Activated T-helper 1 cell treated with anti-CD3 and anti-CD28 coated beads, Interleukin-12 subunit alpha, Interleukin-12 subunit beta, Interleukin-2, Interleukin-4 antibody, amounts not matched to agents 30 ng/mL and 10 ng/mL and 1 ng/mL, durations not matched to agents 14 hours and 24 hours and 36 hours (primary cell): ENCODE measurements at regions of chr17 and their contacts with region 1.

Region 1: GRCh38 chr17:81927653-81928543 is at the start of gene MAFG:
- DNase-seq: peak; percentile 88
- H3K4me3 Mint-ChIP-seq: peak within 1 kb of the TSS; percentile 89
- H3K27ac Mint-ChIP-seq: peak within 1 kb of the TSS; percentile 79
- H3K4me1 Mint-ChIP-seq: peaks cover 15% of the 10 kb centered on the region
- H3K27me3 Mint-ChIP-seq: peaks cover 2% of the 10 kb centered on the region
- total RNA-seq, gene MAFG: 33.8 and 35.5 TPM in 2 replicates

Region 2: DNA sequence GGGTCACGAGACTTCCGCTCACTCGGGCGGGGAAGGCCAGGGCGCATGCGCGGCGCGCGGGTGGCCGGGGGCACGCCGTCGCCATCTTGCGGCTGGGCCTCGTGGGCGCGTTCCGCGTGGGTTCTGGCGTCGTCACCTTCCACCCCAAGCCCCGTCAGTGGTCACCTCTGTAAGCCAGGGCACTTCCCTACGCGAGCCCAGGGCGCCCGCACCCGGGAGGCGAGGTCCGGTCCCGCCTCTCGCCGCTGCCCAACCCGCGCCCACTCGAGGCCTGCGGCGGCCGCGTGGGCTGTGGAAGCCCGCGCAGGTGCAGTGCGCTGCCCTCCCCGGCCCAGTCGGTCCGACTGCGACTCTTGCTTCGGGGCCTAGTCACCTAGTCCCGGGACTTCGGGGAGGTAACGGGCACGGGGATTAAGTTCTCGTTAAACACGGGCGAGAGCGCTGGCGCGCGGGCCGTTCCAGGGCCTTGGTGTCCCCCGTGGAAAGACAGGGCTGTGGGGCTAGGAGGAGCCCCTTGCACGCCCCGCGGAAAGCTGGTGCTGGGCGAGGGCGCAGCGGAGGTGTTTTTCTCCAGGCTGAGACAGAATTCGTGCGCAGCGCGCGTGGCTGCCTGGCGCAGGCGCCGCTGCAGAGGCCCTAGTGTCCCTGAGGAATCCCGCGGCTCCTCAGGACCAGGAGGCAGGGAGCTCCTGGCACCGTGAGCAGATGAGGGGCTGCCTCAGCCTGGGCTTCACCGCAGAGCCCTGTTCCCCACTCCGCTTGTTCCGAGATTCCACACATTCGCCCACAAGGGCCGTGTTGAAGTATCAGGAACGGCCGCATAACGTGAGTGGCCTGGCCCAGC is 56.3 kb before region 1 on chr17:
- intact Hi-C with region 1: loop called (anchors 2 kb)
- DNase-seq: peak; percentile 96
- H3K4me3 Mint-ChIP-seq: peak overlapping the region; percentile 84
- H3K27ac Mint-ChIP-seq: peak overlapping the region; percentile 90
- H3K4me1 Mint-ChIP-seq: peaks cover 7% of the 10 kb centered on the region
- H3K27me3 Mint-ChIP-seq: no peaks in the 10 kb centered on the region

Region 3: DNA sequence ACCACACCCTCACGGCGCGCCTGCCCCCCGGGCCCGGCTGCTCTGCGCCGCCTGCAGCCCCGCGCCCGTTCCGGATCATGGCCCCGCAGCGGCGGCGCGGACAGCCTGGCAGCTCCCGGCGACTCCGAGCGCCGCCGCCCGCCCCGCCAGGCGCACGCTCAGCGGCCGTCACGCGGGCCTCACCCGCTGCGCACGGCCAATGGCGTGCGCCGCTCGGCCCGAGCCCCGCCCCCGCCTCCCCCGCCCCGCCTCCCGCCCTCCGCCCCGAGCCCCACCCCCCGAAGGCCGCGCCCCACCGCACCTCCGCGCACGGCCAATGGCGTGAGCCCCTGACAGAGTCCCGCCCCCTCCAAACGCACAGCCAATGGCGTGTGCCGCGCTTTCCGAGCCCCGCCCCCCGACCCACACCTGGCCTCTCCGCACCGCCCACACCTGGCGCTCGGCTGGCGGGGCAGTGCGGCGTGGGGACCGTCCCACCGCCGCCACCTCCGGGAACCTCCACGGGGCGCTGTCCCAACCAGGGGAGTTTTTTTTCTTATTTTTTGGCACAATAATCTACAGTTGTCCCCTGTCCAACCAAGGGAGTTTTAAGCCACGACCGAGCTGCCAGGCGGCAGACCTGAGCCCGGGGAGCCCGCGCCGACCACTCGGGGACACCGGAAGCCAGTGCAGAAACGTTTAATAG is 16.5 kb before region 1 on chr17 and contains the start of gene PCYT2:
- intact Hi-C with region 1: loop called (anchors 2 kb)
- DNase-seq: peak; percentile 91
- H3K4me3 Mint-ChIP-seq: peak within 1 kb of the TSS; percentile 88
- H3K27ac Mint-ChIP-seq: peak within 1 kb of the TSS; percentile 61
- H3K4me1 Mint-ChIP-seq: peaks cover 26% of the 10 kb centered on the region
- H3K27me3 Mint-ChIP-seq: no peaks in the 10 kb centered on the region
- total RNA-seq, gene PCYT2: 49.5 and 54.5 TPM in 2 replicates

Region 4: DNA sequence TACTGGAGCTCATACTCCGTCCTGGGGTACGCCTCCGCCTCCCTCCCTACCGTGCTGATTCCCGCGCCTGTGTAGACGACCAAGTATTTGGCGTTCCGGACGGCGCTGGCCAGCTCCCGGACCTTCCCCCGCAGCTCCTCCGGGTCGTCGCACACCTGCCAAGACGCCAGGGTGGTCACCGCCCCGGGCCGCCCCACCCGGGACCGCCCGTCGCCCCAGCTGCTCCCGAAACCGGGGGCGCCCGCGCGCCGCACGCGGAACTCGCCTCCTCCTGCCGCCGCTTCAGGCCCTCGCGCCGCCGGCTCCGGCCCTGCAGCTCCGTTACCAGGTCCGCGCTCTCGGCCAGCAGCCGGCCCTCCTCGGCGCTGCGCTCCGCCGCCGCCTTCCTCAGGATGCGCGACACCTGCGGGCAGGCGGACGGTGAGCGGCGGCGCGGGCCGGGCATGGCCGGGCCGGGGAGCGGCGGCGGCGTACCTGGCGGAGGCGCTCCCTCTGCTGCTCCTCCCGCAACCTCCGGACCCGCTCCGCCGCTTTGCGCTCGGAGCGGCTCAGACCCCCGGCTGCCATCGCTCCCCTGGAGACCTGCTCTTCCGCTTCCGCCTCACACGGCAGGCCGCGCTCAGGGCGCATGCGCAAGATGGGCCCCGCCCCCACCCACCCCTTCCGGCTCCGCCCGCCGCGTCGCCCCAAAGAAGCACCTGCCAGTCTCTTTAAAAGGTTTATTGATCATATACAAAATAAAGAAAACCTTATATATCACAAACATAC is 10.1 kb before region 1 on chr17 and contains the start of gene SIRT7:
- intact Hi-C with region 1: loop called (anchors 1 kb)
- DNase-seq: peak; percentile 72
- H3K4me3 Mint-ChIP-seq: peak within 1 kb of the TSS; percentile 90
- H3K27ac Mint-ChIP-seq: peak within 1 kb of the TSS; percentile 87
- H3K4me1 Mint-ChIP-seq: peaks cover 37% of the 10 kb centered on the region
- H3K27me3 Mint-ChIP-seq: no peaks in the 10 kb centered on the region
- total RNA-seq, gene SIRT7: 53.2 and 57.5 TPM in 2 replicates

Region 5: DNA sequence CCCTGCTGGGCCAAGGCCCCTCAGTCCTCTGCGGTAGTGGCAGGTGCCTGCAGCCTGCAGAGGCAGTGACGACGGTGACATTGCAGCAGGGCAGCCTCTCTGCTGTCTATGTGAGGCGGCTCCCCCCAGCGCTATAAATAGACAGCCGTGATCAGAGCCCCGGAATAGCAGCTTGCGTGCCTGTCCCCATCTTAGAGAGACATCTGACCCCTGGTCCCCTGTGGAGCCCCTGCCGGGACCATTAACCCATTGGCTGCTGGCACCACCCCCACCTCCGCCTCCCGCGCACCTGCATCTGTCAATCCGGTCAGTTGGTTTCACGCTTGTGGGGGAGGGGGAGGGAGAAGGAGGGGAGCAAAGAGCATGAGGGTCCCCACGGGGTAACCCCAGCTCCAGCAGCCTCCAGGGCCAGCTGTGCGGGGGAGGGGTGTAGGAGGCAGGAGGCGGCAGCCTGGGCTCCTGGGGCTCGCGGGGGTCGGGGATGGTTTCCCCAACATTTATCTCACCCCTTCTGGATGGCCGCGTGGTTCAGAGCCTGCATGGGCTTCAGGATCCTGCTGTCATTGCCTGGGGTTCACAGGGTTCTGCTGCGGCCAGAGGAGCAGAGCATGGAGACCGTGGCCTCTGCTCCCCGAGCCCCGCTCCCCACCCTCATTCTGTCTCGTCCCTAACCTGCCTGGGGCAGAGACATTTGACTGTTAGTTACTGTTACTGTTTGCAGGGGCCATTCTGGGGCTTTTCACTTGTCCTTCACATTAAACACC is 14.1 kb after region 1 on chr17:
- intact Hi-C with region 1: loop called (anchors 1 kb)
- DNase-seq: no peak
- H3K4me3 Mint-ChIP-seq: no peak overlapping the region
- H3K27ac Mint-ChIP-seq: no peak overlapping the region
- H3K4me1 Mint-ChIP-seq: peaks cover 5% of the 10 kb centered on the region
- H3K27me3 Mint-ChIP-seq: peaks cover 8% of the 10 kb centered on the region

Region 6: DNA sequence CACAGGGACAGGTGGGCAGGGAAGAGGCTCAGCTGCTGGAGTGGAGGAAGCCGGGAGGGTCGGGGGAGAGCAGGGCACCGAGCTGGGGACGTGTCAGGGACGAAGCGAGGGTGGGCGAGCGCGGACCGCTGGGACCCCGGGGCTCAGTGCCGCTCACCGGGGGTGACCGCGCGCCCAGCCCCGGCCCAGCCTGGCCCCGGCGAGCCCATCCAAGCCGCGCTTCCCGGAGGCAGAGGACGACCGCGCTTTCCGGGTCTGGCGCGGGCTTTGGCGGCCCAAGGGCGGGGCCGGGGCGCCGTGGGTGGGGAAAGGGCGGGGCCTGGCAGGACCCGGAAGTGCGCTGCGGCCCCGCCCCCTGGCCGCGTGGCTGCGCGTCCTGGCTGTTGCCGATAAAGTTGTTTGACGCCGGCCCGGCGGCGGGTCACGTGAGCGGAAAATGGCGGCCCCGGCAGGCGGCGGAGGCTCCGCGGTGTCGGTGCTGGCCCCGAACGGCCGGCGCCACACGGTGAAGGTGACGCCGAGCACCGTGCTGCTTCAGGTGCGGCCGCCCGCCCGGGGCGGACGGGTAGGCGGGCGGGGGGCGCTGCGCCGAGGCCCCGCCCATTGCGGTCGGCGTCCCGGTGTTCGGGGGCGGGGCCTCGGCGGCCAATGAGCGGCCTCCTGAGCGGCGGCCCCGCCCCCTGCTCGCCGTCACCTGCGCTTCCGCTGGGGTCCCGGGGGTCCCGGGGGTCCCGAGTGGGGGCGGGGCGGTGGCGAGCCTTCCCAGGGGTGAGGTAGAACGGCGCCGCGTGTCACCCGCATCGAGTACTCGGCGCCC is 49.5 kb after region 1 on chr17 and contains the start of gene ASPSCR1:
- intact Hi-C with region 1: loop called (anchors 1 kb)
- DNase-seq: peak; percentile 86
- H3K4me3 Mint-ChIP-seq: peak within 1 kb of the TSS; percentile 97
- H3K27ac Mint-ChIP-seq: peak within 1 kb of the TSS; percentile 99
- H3K4me1 Mint-ChIP-seq: peaks cover 32% of the 10 kb centered on the region
- H3K27me3 Mint-ChIP-seq: peaks cover 9% of the 10 kb centered on the region
- total RNA-seq, gene ASPSCR1: 32.2 and 33.8 TPM in 2 replicates

Region 7: DNA sequence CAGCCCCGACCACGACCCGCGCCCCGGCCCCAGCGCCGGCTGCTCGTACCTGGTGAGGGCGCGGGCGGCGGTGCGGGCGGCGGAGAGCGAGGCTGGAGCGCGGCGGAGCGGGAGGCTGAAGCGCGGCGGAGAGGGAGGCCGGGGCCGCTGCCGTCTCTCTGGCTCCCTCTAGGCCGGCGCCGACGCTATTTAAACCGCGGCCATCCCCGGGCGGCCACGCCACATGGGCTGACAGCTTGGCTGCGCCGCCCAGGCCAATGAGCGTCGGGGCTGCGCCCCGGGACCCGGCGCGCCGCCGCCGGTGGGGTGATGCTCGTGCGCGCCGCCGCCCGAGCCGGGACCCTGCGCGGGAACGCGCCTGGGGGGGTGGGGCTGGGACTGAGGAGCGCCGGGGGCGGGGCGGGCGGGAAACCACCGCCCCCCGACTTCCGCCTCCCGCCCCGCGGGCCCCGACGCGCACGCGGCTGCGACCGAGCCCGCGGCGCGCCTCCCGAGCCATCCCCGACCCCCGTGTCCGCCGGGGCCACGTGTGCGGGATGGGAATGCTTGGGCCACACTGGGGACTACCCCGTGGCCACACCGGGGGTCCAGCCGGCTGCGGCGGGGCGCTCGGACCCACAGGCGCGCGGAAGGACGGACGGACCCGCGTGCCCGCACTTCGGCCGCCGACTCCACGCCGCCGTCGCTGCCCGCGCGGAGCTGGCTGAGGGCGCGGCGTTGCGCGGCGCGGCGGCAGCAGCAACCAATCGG is 170.3 kb after region 1 on chr17 and contains the start of gene FASN:
- intact Hi-C with region 1: loop called (anchors 1 kb)
- DNase-seq: peak; percentile 90
- H3K4me3 Mint-ChIP-seq: peak within 1 kb of the TSS; percentile 82
- H3K27ac Mint-ChIP-seq: peak within 1 kb of the TSS; percentile 72
- H3K4me1 Mint-ChIP-seq: no peaks in the 10 kb centered on the region
- H3K27me3 Mint-ChIP-seq: no peaks in the 10 kb centered on the region
- total RNA-seq, gene FASN: 415 and 421 TPM in 2 replicates